AG04449 (cell line): ENCODE measurements at regions of chr11 and their contacts with region 1.

Region 1: DNA sequence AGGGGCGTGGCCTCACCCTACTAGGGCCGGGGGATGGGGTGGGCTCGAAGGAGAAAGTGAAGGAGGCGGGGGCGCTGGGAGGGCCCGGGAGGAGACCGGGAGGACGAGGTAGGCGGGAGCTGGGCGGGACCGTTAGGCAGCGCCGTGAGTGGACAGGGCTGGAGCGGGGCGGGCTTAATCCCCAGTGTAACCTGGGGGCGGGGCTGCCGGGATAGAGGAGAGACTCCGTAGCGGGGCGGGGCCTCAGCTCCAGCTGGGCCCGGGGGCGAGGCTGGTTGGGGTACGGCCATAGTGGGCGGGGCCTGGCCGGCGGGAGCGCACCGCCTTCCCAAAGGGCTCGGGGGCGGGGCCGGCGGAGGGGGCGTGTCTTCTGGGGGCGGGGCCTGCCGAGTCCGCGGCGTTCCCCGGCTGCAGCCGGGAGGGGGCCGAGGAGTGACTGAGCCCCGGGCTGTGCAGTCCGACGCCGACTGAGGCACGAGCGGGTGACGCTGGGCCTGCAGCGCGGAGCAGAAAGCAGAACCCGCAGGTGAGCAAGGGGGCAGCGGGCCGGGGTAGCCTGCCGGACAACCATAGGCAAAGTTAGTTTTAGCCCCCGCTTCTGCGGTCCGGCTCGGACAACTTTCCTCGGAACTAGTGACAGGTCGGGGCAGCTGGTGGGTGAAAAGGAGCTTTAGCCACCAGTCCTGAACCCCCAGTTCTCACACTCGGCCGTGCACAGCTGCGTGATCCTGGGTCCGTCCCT is at the start of gene CD82:
- DNase-seq: peak; percentile 91
- H3K4me3 ChIP-seq: peak within 1 kb of the TSS; percentile 69
- CTCF ChIP-seq: peak; percentile 59

Region 2: GRCh38 chr11:44256673-44257291 is 308.6 kb before region 1 on chr11:
- CTCF ChIA-PET with region 1: no interaction called
- POLR2A ChIA-PET with region 1: no interaction called
- DNase-seq: no peak
- H3K4me3 ChIP-seq: no peak overlapping the region
- CTCF ChIP-seq: no peak

Region 3: GRCh38 chr11:44551456-44552139 is 13.8 kb before region 1 on chr11:
- CTCF ChIA-PET with region 1: interaction called, 17 read pairs
- POLR2A ChIA-PET with region 1: no interaction called
- DNase-seq: no peak
- H3K4me3 ChIP-seq: no peak overlapping the region
- CTCF ChIP-seq: no peak

Region 4: DNA sequence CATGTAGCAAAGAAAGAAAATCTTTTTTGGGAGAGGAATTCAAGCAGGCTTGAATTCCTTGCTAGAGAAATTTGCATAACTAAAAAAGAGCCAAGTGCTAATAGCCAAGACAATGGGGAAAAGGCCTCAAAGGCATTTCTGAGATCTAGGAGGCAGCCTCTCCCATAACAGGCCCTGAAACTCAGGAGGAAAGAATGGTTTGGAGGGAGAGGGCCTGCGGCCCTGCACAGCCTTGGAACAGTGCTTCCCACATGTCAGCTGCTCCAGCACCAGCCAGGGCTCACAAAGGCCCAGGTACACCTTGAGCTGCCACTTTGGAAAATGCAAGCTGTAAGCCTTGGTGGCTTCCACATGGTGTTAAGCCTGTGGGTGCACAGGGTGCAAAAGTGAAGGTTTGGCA is 105.9 kb after region 1 on chr11:
- CTCF ChIA-PET with region 1: no interaction called
- POLR2A ChIA-PET with region 1: no interaction called
- DNase-seq: no peak
- H3K4me3 ChIP-seq: no peak overlapping the region
- CTCF ChIP-seq: no peak